Activated CD4-positive, alpha-beta T cell treated with anti-CD3 and anti-CD28 coated beads for 36 hours (primary cell): ENCODE measurements at regions of chr2 and their contacts with region 1.

Region 1: DNA sequence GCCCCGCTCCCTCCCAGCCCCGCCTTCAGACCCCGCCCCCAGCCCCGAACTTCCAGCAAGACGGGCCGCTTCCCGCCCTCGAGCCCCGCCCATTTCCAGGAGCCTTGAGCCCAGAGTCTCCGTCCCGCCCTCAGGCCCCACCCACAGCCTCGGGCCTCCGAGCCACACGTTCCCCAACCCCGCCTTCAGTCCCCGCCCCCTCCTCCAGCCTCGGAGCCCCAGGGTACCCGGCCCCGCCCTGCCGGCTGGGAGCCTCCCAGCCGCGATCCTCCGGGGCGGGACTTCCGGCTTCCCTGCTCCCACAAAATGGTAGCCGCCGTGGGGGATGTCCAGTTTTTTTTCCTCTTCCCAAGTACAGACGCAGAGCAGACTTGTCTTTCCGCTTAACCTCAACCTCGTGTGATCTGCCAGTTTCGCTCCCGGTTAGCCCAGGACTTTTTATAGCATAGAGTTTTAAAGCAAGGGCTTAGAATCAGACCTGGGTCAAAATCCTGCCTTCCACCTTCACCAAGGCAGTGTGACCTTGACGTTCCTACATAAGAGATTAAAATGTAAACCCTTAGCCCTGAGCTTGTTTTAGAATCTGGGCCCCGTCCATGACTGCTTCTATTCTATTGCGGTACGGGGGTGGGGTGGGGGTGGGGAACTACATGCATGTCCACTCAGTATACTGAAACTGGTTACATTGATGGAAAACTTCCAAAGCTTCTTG is 435 bp upstream of the GPR155 start:
- DNase-seq: peak; percentile 100
- ATAC-seq: peak; percentile 94
- H3K4me3 Mint-ChIP-seq: peak overlapping the region; percentile 98
- H3K27ac Mint-ChIP-seq: peak overlapping the region; percentile 94
- H3K4me1 Mint-ChIP-seq: peaks cover 52% of the 10 kb centered on the region
- H3K27me3 Mint-ChIP-seq: no peaks in the 10 kb centered on the region

Region 2: DNA sequence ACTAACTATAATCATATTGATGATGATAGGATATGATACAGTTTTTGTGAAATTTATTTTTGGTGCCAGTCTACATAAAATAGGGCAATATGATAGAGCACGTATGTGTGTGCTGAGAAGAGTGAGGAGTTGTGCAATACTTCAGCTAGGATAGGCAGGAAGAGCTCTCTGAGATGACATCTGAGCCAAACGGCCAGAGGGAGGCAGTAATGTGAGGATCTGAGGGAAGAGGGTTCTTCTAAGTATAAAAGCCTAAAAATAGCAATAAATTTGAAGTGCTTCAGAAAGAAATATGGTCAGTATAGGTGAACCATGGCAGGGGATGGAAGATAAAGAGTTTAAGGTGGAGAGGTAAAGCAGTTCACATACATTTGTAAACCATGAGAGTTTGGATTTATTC is 341.4 kb before region 1 on chr2:
- CTCF ChIA-PET with region 1: no interaction called
- POLR2A ChIA-PET with region 1: no interaction called
- intact Hi-C with region 1: no loop called
- DNase-seq: no peak
- ATAC-seq: no peak
- H3K4me3 Mint-ChIP-seq: no peak overlapping the region
- H3K27ac Mint-ChIP-seq: no peak overlapping the region
- H3K4me1 Mint-ChIP-seq: no peaks in the 10 kb centered on the region
- H3K27me3 Mint-ChIP-seq: no peaks in the 10 kb centered on the region

Region 3: GRCh38 chr2:174248187-174248997 is 238.9 kb before region 1 on chr2 and contains the start of gene OLA1:
- CTCF ChIA-PET with region 1: no interaction called
- POLR2A ChIA-PET with region 1: no interaction called
- intact Hi-C with region 1: loop called in 1 of 2 experiments (anchors 1 kb)
- DNase-seq: peak; percentile 98
- ATAC-seq: peak; percentile 97
- H3K4me3 Mint-ChIP-seq: peak within 1 kb of the TSS; percentile 90
- H3K27ac Mint-ChIP-seq: peak within 1 kb of the TSS; percentile 85
- H3K4me1 Mint-ChIP-seq: peaks cover 31% of the 10 kb centered on the region
- H3K27me3 Mint-ChIP-seq: no peaks in the 10 kb centered on the region
- total RNA-seq, gene OLA1: 136 to 157 TPM

Region 4: DNA sequence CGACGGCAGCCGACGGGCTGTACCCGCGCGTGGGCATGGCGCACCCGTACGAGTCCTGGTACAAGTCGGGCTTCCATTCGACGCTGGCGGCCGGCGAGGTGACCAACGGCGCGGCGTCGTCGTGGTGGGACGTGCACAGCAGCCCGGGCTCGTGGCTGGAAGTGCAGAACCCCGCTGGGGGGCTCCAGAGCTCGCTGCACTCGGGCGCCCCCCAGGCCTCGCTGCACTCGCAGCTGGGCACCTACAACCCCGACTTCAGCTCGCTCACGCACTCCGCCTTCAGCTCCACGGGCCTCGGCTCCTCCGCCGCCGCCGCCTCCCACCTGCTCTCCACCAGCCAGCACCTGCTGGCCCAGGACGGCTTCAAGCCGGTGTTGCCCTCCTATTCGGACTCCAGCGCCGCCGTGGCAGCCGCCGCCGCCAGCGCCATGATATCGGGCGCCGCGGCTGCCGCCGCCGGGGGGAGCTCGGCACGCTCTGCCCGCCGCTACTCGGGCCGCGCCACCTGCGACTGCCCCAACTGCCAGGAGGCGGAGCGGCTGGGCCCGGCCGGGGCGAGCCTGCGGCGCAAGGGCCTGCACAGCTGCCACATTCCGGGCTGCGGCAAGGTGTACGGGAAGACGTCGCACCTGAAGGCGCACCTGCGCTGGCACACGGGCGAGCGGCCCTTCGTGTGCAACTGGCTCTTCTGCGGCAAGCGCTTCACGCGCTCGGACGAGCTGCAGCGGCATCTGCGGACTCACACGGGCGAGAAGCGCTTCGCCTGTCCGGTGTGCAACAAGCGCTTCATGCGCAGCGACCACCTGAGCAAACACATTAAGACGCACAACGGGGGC is 150.5 kb before region 1 on chr2:
- CTCF ChIA-PET with region 1: no interaction called
- POLR2A ChIA-PET with region 1: no interaction called
- intact Hi-C with region 1: no loop called
- DNase-seq: peak; percentile 68
- ATAC-seq: peak; percentile 28
- H3K4me3 Mint-ChIP-seq: peak overlapping the region; percentile 63
- H3K27ac Mint-ChIP-seq: no peak overlapping the region
- H3K4me1 Mint-ChIP-seq: peaks cover 39% of the 10 kb centered on the region
- H3K27me3 Mint-ChIP-seq: peaks cover 63% of the 10 kb centered on the region

Region 5: DNA sequence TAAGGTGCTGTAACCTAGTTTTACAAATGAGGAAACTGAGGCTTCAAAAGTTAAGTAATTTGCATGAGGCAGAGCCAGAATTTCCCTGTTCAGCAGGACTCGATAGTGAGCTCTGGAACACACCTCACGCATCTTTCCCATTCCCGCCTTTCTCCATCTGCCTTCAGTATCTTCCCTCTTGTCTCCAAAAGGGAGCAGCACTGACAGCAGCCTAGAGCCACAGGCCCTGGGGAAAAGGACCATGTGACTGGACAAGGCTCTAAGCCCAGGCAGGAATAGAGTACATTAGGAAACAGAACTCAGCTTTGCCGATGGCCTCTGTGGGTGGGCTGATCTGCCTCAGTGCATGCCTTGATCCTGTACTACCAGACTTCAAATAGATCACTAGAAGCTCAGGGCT is 21.9 kb before region 1 on chr2:
- CTCF ChIA-PET with region 1: interaction called, 14 read pairs
- POLR2A ChIA-PET with region 1: no interaction called
- intact Hi-C with region 1: loop called in 1 of 2 experiments (anchors 2 kb)
- DNase-seq: no peak
- ATAC-seq: no peak
- H3K4me3 Mint-ChIP-seq: no peak overlapping the region
- H3K27ac Mint-ChIP-seq: no peak overlapping the region
- H3K4me1 Mint-ChIP-seq: no peaks in the 10 kb centered on the region
- H3K27me3 Mint-ChIP-seq: no peaks in the 10 kb centered on the region

Region 6: GRCh38 chr2:174529923-174530322 is 42.7 kb after region 1 on chr2:
- CTCF ChIA-PET with region 1: no interaction called
- POLR2A ChIA-PET with region 1: no interaction called
- intact Hi-C with region 1: no loop called
- DNase-seq: no peak
- ATAC-seq: no peak
- H3K4me3 Mint-ChIP-seq: no peak overlapping the region
- H3K27ac Mint-ChIP-seq: no peak overlapping the region
- H3K4me1 Mint-ChIP-seq: peaks cover under 1% of the 10 kb centered on the region
- H3K27me3 Mint-ChIP-seq: no peaks in the 10 kb centered on the region

Region 7: DNA sequence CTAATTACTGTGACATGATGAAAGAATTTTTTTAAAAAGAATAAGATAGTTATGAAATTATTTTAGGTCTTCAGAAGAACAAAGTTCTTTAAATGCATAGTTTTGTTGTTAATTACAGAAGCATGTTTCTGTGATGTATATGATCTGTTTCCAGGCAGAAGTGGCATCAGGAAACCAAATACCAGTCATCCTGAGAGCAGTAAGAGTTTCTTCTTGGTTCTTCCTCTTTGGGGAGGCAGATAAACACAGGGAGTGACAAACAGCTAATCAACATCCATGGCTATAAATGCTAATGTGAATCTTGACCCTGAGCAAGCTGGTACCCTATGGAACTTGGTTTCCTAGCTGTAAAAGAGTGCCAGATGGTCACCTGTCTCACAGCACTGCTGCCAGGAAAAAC is 81.2 kb after region 1 on chr2:
- CTCF ChIA-PET with region 1: no interaction called
- POLR2A ChIA-PET with region 1: no interaction called
- intact Hi-C with region 1: loop called in 1 of 2 experiments (anchors 1 kb)
- DNase-seq: no peak
- ATAC-seq: peak; percentile 75
- H3K4me3 Mint-ChIP-seq: no peak overlapping the region
- H3K27ac Mint-ChIP-seq: peak overlapping the region; percentile 47
- H3K4me1 Mint-ChIP-seq: peaks cover 59% of the 10 kb centered on the region
- H3K27me3 Mint-ChIP-seq: no peaks in the 10 kb centered on the region

Region 8: DNA sequence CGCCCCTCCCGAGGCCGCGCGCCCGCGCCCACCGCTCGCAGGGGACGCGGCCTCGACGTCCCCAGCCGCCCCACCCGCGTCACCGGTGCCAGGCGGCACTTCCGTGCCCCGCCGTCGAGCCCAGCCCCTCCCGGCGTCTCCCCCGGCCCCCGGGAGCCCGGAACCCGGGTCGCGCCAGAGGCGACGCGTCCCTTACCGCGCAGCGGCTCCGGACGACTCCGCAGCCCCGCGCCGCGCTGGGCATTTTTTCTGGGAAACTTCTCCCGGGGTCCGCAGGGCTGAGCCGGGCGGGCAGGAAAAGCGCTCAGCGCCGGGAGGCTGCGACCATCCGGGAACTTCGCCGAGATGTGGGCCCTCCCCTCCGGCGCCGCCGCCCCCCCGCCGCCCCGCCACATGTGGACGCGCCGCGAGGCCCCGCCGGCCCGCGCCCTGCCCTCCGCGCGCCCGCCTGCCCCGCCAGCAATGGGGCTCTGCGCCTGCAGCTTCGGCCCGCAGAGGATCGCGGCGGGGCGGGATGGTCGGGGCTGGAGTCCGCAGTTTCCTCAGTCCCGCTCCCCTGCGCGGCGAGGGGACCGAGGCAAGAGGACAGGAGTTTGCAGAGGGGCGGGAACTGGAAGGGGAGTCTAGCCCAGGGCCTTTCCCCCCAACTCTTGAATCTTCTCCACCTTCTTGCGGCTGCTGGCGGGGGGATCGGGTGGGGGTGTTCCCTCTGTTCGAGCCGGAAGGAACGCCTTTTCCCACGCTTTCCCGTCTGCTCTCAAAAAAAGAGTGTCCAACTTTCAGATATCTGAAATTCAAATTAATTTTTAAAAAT is 195.5 kb after region 1 on chr2:
- CTCF ChIA-PET with region 1: interaction called, 5 read pairs
- POLR2A ChIA-PET with region 1: no interaction called
- intact Hi-C with region 1: loop called in 1 of 2 experiments (anchors 2 kb)
- DNase-seq: peak; percentile 66
- ATAC-seq: peak; percentile 66
- H3K4me3 Mint-ChIP-seq: peak overlapping the region; percentile 82
- H3K27ac Mint-ChIP-seq: peak overlapping the region; percentile 90
- H3K4me1 Mint-ChIP-seq: peaks cover 48% of the 10 kb centered on the region
- H3K27me3 Mint-ChIP-seq: no peaks in the 10 kb centered on the region

Region 9: DNA sequence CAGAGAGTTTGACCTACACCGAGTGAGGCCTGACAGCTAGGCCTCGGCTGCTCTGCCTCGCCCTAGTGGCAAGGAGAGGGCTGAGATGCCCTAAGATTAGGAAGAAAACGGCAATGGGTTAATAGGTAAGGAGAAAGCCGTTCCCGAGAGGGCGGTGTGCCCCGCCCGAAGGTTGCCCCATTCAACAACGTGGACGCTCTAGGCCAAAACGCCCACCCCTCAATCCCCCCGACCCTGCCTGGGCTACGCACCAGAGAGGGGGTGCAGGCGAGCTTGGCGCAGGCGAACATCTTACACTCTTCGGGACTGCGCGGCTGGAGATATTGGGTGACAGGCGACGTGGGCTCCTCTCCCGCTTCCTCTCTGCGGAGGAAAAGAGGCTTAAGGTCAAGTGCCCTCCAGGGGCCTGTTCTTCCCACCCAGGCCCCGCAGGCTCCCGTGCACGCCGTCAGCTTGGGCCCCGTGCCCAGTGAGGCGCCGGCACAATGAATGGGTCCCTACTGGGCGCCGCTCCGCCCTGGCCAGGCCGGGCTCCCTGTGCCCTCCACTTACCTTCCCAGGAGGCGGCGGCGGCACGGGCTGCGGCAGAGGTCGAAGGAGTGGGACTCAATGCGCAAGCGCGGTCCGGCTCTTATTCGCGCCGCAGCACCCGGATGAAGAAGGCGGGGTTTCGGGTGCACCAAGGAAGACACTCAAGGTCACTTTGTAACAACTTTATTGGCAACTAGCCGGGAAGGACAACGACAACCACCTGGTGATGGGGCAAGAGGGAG is 694.0 kb after region 1 on chr2 and contains the start of gene ATP5MC3:
- CTCF ChIA-PET with region 1: no interaction called
- POLR2A ChIA-PET with region 1: no interaction called
- intact Hi-C with region 1: loop called in 1 of 2 experiments (anchors 5 kb)
- DNase-seq: peak; percentile 96
- ATAC-seq: peak; percentile 95
- H3K4me3 Mint-ChIP-seq: peak within 1 kb of the TSS; percentile 95
- H3K27ac Mint-ChIP-seq: peak within 1 kb of the TSS; percentile 94
- H3K4me1 Mint-ChIP-seq: peaks cover 32% of the 10 kb centered on the region
- H3K27me3 Mint-ChIP-seq: no peaks in the 10 kb centered on the region
- total RNA-seq, gene ATP5MC3: 244 to 386 TPM